IMR-90 (cell line): ENCODE measurements at regions of chr1 and their contacts with region 1.

Region 1: GRCh38 chr1:76330991-76331603 is 256.6 kb downstream of the ST6GALNAC3 start:
- DNase-seq: peak; percentile 77
- ATAC-seq: peak; percentile 96
- H3K4me3 ChIP-seq: no peak overlapping the region
- H3K27ac ChIP-seq: no peak overlapping the region
- H3K4me1 ChIP-seq: no peaks in the 10 kb centered on the region
- H3K27me3 ChIP-seq: no peaks in the 10 kb centered on the region
- CTCF ChIP-seq: peak; percentile 89
- POLR2A ChIP-seq: no peak
- RAD21 ChIP-seq: peak; percentile 85

Region 2: DNA sequence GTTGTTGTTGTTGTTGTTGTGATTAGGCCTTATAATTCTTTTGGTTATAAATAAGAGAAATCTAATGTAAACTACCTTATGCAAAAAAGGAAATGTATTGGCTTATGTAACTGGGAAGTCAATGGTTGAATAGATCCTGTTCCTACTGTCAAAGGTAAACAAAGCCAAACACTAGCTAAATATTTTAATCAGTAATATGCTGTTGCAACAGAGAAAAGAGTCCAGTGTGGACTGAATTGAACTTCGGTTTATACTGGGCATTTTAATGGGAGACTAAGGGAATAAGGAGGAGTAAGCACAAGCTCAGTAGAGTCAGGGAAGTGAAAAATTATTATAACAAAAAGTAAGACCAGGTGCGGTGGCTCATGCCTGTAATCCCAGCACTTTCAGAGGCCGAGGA is 519.0 kb before region 1 on chr1:
- CTCF ChIA-PET with region 1: no interaction called
- POLR2A ChIA-PET with region 1: no interaction called
- dilution Hi-C with region 1: no loop called
- in situ Hi-C with region 1: no loop called
- intact Hi-C with region 1: no loop called
- DNase-seq: no peak
- ATAC-seq: peak; percentile 54; the same call in 1 of the 2 replicates
- H3K4me3 ChIP-seq: no peak overlapping the region
- H3K27ac ChIP-seq: no peak overlapping the region
- H3K4me1 ChIP-seq: no peaks in the 10 kb centered on the region
- H3K27me3 ChIP-seq: no peaks in the 10 kb centered on the region
- CTCF ChIP-seq: no peak
- POLR2A ChIP-seq: no peak
- RAD21 ChIP-seq: no peak

Region 3: DNA sequence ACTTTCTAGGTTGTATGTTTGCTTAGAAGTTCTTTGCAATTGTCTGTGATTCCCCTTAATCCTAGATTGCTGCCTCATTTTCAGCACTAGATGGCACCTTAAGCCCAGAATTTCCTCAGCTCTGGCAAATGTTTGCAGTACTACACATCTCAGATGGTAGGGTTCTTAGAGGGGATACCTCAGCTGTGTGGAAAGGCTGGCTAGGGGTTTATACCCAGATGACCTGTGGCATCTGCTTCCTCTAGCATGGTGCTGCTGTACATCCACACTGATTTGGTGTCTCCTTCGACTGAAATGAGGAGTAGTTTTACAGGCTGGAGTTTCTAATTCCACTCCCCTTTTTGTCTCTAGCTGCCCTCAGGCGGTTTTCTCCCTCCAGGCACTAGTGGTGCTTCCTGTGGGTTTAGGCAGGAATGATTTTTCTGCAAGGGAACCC is 422.4 kb before region 1 on chr1:
- CTCF ChIA-PET with region 1: no interaction called
- POLR2A ChIA-PET with region 1: no interaction called
- dilution Hi-C with region 1: no loop called
- in situ Hi-C with region 1: no loop called
- intact Hi-C with region 1: loop called (anchors 5 kb)
- DNase-seq: peak; percentile 50
- ATAC-seq: peak; percentile 91
- H3K4me3 ChIP-seq: no peak overlapping the region
- H3K27ac ChIP-seq: no peak overlapping the region
- H3K4me1 ChIP-seq: no peaks in the 10 kb centered on the region
- H3K27me3 ChIP-seq: no peaks in the 10 kb centered on the region
- CTCF ChIP-seq: peak; percentile 64
- POLR2A ChIP-seq: no peak
- RAD21 ChIP-seq: peak; percentile 68

Region 4: DNA sequence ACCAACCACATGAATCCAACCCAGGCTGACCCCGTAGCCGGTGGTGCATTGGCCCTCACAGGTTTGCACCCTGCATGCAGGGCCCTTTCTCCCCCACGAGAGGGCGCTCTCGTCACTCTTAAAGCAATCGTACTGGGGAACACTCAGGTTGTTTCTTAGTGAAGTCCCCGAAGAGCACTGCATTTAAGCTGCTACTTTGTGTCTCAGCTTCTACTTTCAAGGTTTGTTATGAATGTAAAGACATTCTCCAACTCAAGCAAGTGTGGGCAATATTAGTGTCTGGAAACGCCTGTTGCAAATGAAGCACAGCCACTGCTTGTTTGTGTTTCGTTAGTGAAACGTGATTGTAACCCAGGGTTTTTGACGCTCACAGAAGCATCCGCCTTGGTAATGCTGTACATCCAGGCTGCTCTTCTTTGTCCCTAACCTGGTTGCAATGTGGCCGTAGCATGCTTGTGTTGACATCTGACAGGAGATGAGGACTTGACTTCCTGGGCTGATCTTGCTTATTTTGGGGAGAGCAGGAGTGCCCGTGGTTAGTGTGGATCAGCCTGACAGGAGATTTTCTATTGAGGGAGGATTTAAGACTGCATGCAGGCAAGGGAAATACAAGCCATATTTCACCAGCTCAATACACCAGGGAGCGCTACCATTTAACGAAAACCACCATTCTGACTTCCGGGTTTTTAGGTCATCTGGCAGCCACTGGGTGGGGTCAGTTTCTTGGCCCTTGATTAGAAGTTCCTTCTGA is 176.7 kb before region 1 on chr1:
- CTCF ChIA-PET with region 1: no interaction called
- POLR2A ChIA-PET with region 1: no interaction called
- dilution Hi-C with region 1: no loop called
- in situ Hi-C with region 1: no loop called
- intact Hi-C with region 1: loop called (anchors 5 kb)
- DNase-seq: peak; percentile 49
- ATAC-seq: peak; percentile 98
- H3K4me3 ChIP-seq: no peak overlapping the region
- H3K27ac ChIP-seq: no peak overlapping the region
- H3K4me1 ChIP-seq: no peaks in the 10 kb centered on the region
- H3K27me3 ChIP-seq: no peaks in the 10 kb centered on the region; the same call in 1 of the 2 replicates
- CTCF ChIP-seq: peak; percentile 80
- POLR2A ChIP-seq: no peak
- RAD21 ChIP-seq: peak; percentile 78

Region 5: GRCh38 chr1:76294482-76295194 is 36.5 kb before region 1 on chr1:
- CTCF ChIA-PET with region 1: no interaction called
- POLR2A ChIA-PET with region 1: no interaction called
- dilution Hi-C with region 1: no loop called
- in situ Hi-C with region 1: no loop called
- intact Hi-C with region 1: no loop called
- DNase-seq: no peak
- ATAC-seq: no peak
- H3K4me3 ChIP-seq: no peak overlapping the region
- H3K27ac ChIP-seq: no peak overlapping the region
- H3K4me1 ChIP-seq: no peaks in the 10 kb centered on the region
- H3K27me3 ChIP-seq: no peaks in the 10 kb centered on the region
- CTCF ChIP-seq: no peak
- POLR2A ChIP-seq: no peak
- RAD21 ChIP-seq: no peak

Region 6: GRCh38 chr1:76418531-76418930 is 87.4 kb after region 1 on chr1:
- CTCF ChIA-PET with region 1: no interaction called
- POLR2A ChIA-PET with region 1: no interaction called
- dilution Hi-C with region 1: no loop called
- in situ Hi-C with region 1: no loop called
- intact Hi-C with region 1: no loop called
- DNase-seq: no peak
- ATAC-seq: no peak
- H3K4me3 ChIP-seq: no peak overlapping the region
- H3K27ac ChIP-seq: no peak overlapping the region
- H3K4me1 ChIP-seq: no peaks in the 10 kb centered on the region
- H3K27me3 ChIP-seq: no peaks in the 10 kb centered on the region
- CTCF ChIP-seq: no peak
- POLR2A ChIP-seq: no peak
- RAD21 ChIP-seq: no peak

Region 7: GRCh38 chr1:76891931-76892622 is 561.0 kb after region 1 on chr1:
- CTCF ChIA-PET with region 1: no interaction called
- POLR2A ChIA-PET with region 1: no interaction called
- dilution Hi-C with region 1: no loop called
- in situ Hi-C with region 1: no loop called
- intact Hi-C with region 1: loop called (anchors 5 kb)
- DNase-seq: peak; percentile 61
- ATAC-seq: peak; percentile 89
- H3K4me3 ChIP-seq: no peak overlapping the region
- H3K27ac ChIP-seq: no peak overlapping the region
- H3K4me1 ChIP-seq: no peaks in the 10 kb centered on the region
- H3K27me3 ChIP-seq: no peaks in the 10 kb centered on the region
- CTCF ChIP-seq: no peak
- POLR2A ChIP-seq: no peak
- RAD21 ChIP-seq: no peak

Region 8: GRCh38 chr1:77126307-77126706 is 795.2 kb after region 1 on chr1:
- CTCF ChIA-PET with region 1: no interaction called
- POLR2A ChIA-PET with region 1: no interaction called
- dilution Hi-C with region 1: no loop called
- in situ Hi-C with region 1: no loop called
- intact Hi-C with region 1: loop called (anchors 1 kb)
- DNase-seq: peak; percentile 80
- ATAC-seq: peak; percentile 88
- H3K4me3 ChIP-seq: no peak overlapping the region
- H3K27ac ChIP-seq: no peak overlapping the region
- H3K4me1 ChIP-seq: no peaks in the 10 kb centered on the region
- H3K27me3 ChIP-seq: no peaks in the 10 kb centered on the region
- CTCF ChIP-seq: peak; percentile 83
- POLR2A ChIP-seq: no peak
- RAD21 ChIP-seq: peak; percentile 93